ENCODE measurements at regions of chr11 and their contacts with region 1.

Region 1: DNA sequence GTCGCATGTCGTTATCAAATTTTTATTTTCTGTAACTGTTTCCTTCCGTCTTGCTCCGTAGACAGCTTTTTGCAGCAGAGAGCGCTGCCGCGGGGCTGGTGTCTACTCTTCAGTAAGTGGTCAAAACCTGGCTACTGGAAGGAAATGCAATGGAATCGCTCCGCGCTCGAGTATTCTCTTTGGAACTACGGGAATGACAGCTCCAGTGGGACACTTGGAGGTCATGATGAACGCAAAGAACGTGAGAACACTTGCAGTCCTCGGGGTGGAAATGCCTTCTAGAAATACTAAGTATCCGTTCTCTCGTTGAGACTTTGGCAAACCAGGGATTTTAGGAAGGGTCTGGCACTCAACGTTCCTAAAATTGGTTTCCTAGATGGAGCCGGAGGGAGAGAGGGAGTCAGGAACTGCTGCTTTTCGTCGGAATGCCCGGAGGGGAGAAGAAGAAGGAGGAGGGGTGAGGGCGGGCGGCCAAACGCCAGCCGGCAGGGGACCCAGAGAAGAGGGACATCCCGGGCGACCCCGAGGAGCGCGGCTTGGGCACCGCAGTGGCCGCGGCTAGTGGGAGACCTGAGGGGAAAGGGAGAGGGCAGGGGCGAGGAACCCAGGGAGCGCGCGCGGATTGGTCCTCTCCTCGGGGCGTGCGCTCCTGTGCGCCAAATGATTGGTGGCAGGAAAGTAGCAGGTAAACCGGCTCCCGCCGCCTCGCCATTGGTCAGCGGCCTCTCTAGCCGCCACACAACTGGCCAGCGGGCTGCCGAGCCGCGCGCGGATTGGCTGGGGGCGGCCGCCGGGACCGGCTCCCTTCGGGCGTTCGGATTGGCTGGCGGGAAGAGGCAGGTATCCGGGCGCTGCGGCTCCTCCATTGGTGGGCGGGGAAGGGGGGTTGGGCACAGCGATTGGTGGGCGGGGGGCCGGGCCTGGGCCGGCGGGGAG is 490 bp upstream of the BMAL1 start:
- DNase-seq: peak; percentile 98
- H3K4me3 Mint-ChIP-seq: peak overlapping the region; percentile 94
- H3K27ac Mint-ChIP-seq: peak overlapping the region; percentile 78
- H3K4me1 Mint-ChIP-seq: peaks cover 51% of the 10 kb centered on the region
- H3K27me3 Mint-ChIP-seq: peaks cover 36% of the 10 kb centered on the region

Region 2: GRCh38 chr11:13288375-13289029 is 11.4 kb after region 1 on chr11:
- CTCF ChIA-PET with region 1: no interaction called
- POLR2A ChIA-PET with region 1: interaction called, 11 read pairs
- DNase-seq: no peak
- H3K4me3 Mint-ChIP-seq: no peak overlapping the region
- H3K27ac Mint-ChIP-seq: peak overlapping the region; percentile 44
- H3K4me1 Mint-ChIP-seq: peaks cover 74% of the 10 kb centered on the region
- H3K27me3 Mint-ChIP-seq: no peaks in the 10 kb centered on the region

Region 3: GRCh38 chr11:13297917-13298356 is 20.8 kb after region 1 on chr11:
- CTCF ChIA-PET with region 1: interaction called, 3 read pairs
- POLR2A ChIA-PET with region 1: interaction called, 23 read pairs
- DNase-seq: peak; percentile 66
- H3K4me3 Mint-ChIP-seq: no peak overlapping the region
- H3K27ac Mint-ChIP-seq: peak overlapping the region; percentile 74
- H3K4me1 Mint-ChIP-seq: peaks cover 76% of the 10 kb centered on the region
- H3K27me3 Mint-ChIP-seq: no peaks in the 10 kb centered on the region

Region 4: DNA sequence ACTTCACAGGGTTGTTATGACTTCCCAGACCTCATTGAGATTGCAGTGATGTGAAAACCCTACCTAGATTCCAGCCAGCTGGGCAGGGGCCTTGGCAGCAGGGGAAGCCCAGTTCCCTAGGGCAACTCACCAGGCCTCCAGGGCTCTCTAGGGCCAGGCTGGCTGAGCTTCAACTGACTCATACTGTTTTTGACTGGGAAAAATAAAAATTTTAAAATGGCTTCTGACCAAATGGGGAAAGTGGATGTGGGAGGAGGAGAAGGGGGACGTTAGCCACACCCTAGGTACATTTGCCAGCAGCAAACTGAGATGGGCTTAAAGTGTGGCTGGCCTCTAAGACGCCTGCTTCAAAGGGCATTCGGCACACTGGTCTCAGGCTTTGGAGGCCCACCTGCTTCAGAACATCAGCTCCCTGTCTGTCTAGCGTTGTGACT is 39.4 kb after region 1 on chr11:
- CTCF ChIA-PET with region 1: no interaction called
- POLR2A ChIA-PET with region 1: interaction called, 11 read pairs
- DNase-seq: no peak
- H3K4me3 Mint-ChIP-seq: no peak overlapping the region
- H3K27ac Mint-ChIP-seq: no peak overlapping the region
- H3K4me1 Mint-ChIP-seq: peaks cover 32% of the 10 kb centered on the region
- H3K27me3 Mint-ChIP-seq: no peaks in the 10 kb centered on the region

Region 5: DNA sequence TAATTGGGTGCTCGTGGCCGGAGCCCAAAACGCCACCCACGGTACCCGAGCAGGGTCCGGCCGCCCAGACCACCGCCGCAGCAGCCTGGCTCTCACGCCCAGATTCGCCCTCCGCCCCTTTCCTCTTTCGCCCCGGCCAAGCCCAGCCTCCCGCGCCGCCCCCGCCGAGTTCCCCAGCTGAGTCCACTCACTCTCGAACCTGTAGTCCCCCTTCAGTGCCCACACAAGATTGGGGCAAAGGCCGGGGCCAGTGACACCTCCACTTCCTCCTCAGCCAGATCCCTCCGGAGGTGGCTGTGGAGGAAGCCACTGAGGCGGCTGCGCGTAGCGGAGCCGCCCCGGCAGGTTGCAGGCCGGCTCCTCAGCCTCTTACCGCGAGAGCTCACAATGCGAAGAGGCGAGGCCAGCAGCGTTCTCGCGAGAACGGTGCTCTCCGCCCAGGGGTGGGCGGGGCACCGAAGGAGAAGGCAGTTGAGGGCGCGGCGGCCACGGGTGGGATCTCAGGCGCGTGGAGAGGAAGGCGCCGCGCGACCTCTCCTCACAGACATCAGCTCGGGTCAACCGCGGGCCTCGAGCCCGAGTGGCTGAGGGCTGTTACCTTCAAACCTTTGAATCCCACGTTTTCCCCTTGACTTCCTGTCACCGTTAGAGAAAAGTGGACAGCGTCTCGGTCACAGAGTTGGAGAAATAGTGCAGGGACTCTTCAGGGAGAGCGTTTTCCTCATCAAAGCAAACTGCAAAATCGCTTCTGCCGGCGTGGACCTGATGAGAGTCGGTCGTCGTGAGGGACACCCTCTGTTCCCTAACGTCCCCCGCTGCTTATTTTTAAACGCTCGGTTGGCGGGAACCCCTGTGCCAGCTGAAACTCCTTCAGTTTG is 186.0 kb after region 1 on chr11 and contains the start of gene BTBD10:
- CTCF ChIA-PET with region 1: interaction called, 4 read pairs
- POLR2A ChIA-PET with region 1: interaction called, 12 read pairs
- DNase-seq: peak; percentile 94
- H3K4me3 Mint-ChIP-seq: peak within 1 kb of the TSS; percentile 97
- H3K27ac Mint-ChIP-seq: peak within 1 kb of the TSS; percentile 97
- H3K4me1 Mint-ChIP-seq: peaks cover 42% of the 10 kb centered on the region
- H3K27me3 Mint-ChIP-seq: peaks cover 4% of the 10 kb centered on the region
- total RNA-seq, gene BTBD10: 26.0 to 26.3 TPM

Region 6: GRCh38 chr11:13567551-13567950 is 290.5 kb after region 1 on chr11:
- CTCF ChIA-PET with region 1: no interaction called
- POLR2A ChIA-PET with region 1: no interaction called
- DNase-seq: no peak
- H3K4me3 Mint-ChIP-seq: no peak overlapping the region
- H3K27ac Mint-ChIP-seq: no peak overlapping the region
- H3K4me1 Mint-ChIP-seq: no peaks in the 10 kb centered on the region
- H3K27me3 Mint-ChIP-seq: peaks cover 2% of the 10 kb centered on the region